Activated CD8-positive, alpha-beta memory T cell treated with anti-CD3 and anti-CD28 coated beads, Interleukin-2, amount 10 ng/mL, durations not matched to agents 7 days and 5 days (primary cell): ENCODE measurements at regions of chr22 and their contacts with region 1.

Region 1: GRCh38 chr22:30920407-30920806 is 48.2 kb downstream of the MORC2 start:
- DNase-seq: peak; percentile 88
- ATAC-seq: peak; percentile 79
- H3K4me3 Mint-ChIP-seq: peak overlapping the region; percentile 36
- H3K27ac Mint-ChIP-seq: no peak overlapping the region
- H3K4me1 Mint-ChIP-seq: peaks cover 16% of the 10 kb centered on the region
- H3K27me3 Mint-ChIP-seq: no peaks in the 10 kb centered on the region

Region 2: GRCh38 chr22:30742291-30743256 is 177.8 kb before region 1 on chr22:
- CTCF ChIA-PET with region 1: interaction called, 18 read pairs
- DNase-seq: peak; percentile 73
- ATAC-seq: peak; percentile 50
- H3K4me3 Mint-ChIP-seq: peak overlapping the region; percentile 52
- H3K27ac Mint-ChIP-seq: peak overlapping the region; percentile 98
- H3K4me1 Mint-ChIP-seq: peaks cover 77% of the 10 kb centered on the region
- H3K27me3 Mint-ChIP-seq: no peaks in the 10 kb centered on the region

Region 3: DNA sequence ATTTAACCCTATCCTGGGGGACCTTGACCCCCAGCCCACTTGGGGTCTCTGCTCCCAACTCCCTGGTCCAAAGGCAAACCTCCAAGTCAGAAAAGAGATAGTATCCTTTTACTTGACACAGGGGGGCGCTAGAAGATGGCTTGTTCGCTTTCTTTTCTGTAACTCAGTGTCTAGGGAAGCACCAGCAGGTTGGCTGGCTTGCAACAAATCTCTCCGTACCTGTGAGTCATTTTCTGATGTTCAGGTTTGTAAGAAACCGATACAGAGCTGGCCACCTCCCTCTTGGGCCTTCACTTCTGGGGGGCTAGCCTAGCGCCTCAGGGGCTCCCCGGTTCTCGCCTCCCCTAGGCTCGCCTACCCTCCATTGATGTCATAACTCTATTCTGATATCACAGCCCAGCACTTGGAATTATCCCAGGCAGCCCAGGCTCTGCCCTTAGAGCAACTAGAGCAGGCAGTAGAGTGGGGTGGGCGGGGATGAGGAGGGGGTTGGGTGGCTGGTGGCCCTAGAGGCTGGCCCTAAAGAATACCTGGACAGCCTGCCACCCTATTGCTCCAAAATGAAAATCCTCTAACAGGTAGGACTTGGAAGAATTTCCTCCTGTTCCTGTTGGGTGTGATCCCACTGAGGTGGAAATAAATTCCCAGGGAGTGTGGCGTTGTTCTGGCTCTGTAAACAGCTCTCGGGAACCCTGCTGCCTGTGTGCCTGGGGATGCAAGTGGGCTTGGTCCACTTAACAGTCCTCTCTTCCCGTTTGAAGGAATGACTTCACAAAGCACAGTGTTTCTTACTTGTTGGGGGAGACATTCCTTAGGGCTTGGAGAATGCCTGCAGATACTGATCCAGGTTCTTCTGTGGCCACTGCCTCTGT is 156.4 kb before region 1 on chr22:
- CTCF ChIA-PET with region 1: interaction called, 32 read pairs
- DNase-seq: peak; percentile 74
- ATAC-seq: peak; percentile 87
- H3K4me3 Mint-ChIP-seq: no peak overlapping the region
- H3K27ac Mint-ChIP-seq: no peak overlapping the region
- H3K4me1 Mint-ChIP-seq: peaks cover 2% of the 10 kb centered on the region
- H3K27me3 Mint-ChIP-seq: no peaks in the 10 kb centered on the region

Region 4: DNA sequence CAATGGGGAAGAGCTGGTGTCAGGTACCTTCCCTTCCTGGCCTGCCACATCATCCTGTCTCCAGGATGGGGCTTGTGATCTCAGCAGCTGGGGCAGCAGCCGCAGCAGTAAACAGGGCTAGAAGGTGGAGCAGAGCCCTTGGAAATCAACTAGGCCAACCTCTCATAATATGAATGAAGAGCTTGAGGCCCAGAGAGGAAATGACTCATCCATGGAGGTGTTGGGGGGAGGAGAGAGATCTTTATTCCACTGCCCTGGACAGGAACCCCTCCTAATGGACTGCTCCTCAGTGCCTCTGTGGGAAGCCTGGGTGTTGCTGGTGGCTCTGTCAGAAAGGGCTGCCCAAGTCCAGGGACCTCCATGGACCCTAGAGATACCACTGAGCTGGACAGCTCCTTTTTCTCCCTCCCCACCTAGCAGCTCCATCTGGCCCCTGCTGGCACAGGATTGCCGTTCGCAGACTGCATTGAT is 114.0 kb before region 1 on chr22:
- CTCF ChIA-PET with region 1: no interaction called
- DNase-seq: no peak
- ATAC-seq: no peak
- H3K4me3 Mint-ChIP-seq: no peak overlapping the region
- H3K27ac Mint-ChIP-seq: no peak overlapping the region
- H3K4me1 Mint-ChIP-seq: peaks cover 17% of the 10 kb centered on the region
- H3K27me3 Mint-ChIP-seq: peaks cover 26% of the 10 kb centered on the region